Activated CD8-positive, alpha-beta T cell treated with anti-CD3 and anti-CD28 coated beads, Interleukin-2, amount 10 ng/mL, durations not matched to agents 7 days and 5 days (primary cell): ENCODE measurements at regions of chr3 and their contacts with region 1.

Region 1: DNA sequence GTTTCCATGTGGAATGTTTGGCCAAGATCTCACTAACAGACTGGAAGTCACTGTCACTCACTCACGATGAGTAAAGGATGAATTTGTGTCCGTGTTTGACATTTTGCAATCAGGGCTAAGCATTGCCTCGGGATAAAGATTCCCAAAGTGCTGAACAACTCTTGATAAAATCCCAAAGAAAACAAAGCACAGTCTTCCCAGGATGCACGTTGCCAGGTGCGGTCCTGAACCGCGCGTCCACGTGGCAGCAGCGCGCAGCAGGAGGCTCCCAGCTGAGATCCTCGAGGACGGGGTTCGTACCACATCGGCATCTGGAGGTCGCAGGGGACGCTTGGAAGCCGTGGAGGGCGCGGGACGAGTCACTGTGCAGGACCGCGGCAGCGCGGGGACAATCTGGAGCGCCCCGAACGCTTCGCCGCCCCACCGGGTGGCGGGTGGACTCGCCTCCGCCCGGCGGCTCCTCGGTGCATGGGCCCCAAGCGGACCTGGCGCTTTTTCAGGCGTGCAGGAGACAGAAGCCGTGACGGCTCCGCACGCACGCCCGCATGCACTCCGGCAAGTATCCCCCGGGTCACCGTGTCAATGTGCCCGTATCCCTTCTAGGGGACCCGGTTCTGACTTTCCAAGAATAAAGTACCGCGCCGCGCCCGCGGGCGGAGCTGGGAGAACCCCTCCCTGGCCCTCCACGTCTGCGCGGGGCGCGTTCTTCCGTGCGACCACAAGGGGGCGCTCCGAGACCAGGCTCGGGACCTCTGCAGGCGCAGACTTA is 17.7 kb downstream of the CPN2 start:
- DNase-seq: peak; percentile 91
- ATAC-seq: peak; percentile 98
- H3K4me3 Mint-ChIP-seq: peak overlapping the region; percentile 71
- H3K27ac Mint-ChIP-seq: no peak overlapping the region
- H3K4me1 Mint-ChIP-seq: peaks cover 8% of the 10 kb centered on the region
- H3K27me3 Mint-ChIP-seq: peaks cover 18% of the 10 kb centered on the region

Region 2: GRCh38 chr3:194064380-194065332 is 268.7 kb before region 1 on chr3:
- CTCF ChIA-PET with region 1: no interaction called
- POLR2A ChIA-PET with region 1: no interaction called
- DNase-seq: no peak
- ATAC-seq: no peak
- H3K4me3 Mint-ChIP-seq: no peak overlapping the region
- H3K27ac Mint-ChIP-seq: no peak overlapping the region
- H3K4me1 Mint-ChIP-seq: peaks cover under 1% of the 10 kb centered on the region
- H3K27me3 Mint-ChIP-seq: peaks cover 44% of the 10 kb centered on the region

Region 3: DNA sequence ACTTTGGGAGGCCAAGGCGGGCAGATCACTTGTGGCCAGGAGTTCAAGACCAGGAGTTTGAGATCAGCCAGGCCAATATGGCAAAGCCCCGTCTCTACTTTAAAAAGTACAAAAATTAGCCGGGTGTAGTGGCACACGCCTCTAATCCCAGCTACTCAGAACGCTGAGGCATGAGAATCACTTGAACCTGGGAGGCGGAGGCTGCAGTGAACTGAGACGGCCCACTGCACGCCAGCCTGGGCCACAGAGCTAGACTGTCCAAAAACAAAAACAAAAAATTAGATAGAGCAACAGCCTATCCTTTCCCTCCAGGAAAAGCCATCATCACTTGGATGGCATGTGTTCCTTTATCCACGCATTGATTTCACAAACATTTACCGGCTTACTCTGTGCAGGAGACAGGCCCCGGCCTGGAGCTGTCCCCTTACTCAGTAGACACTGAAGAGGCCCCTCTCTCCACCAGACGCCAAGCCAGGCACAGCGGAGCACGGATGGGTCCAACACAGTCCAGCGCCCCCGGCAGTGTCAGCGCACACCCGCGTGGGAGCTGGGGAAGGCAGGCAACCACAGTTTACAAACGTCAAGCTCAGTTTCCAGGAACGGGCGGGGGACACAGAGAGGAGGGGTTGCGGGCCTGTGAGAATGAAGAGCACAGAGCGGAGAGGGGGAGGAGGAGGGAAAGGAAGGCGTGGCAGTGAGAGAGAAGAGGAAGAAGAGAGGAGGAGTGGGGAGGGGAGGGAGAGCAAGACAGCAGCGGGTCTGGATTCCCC is 62.6 kb after region 1 on chr3:
- CTCF ChIA-PET with region 1: interaction called, 10 read pairs
- POLR2A ChIA-PET with region 1: interaction called, 3 read pairs
- DNase-seq: peak; percentile 72
- ATAC-seq: peak; percentile 57
- H3K4me3 Mint-ChIP-seq: peak overlapping the region; percentile 44
- H3K27ac Mint-ChIP-seq: peak overlapping the region; percentile 54
- H3K4me1 Mint-ChIP-seq: peaks cover 50% of the 10 kb centered on the region
- H3K27me3 Mint-ChIP-seq: peaks cover 22% of the 10 kb centered on the region

Region 4: DNA sequence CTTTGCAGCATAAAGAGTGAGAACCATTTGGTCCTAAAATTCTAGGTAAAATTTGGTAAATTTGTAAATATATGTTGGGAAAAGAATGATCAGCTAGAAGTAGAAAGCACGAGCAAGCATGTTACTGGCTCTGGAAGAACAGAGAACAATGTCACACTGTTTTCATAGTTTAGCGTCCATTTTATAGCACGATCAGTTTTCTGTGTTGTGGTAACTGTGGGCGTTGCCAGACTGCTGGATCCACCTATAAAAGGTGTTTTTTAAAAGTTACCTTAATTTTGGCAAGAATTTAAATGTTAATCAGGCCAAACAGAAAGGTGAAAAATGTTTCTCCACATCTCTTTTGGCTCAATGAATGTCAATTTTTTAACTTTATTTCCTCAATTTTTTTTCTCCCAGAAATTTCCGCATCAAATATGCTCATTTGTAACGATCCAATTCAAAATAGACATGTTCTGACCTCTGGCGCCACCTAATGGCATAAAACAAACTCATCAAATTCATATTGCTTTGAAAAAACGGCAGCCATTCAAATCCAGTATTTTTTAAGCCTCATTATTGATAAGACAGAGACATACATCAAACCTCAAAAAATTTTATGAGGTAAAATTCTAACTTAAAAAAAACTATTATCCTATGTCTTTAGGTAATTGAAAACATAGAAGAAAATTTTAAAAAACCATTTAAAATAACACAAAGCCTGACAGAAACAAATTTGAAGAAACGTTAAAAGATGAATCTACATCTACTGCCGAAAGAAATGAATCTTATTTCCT is 71.2 kb after region 1 on chr3:
- CTCF ChIA-PET with region 1: interaction called, 33 read pairs
- POLR2A ChIA-PET with region 1: no interaction called
- DNase-seq: peak; percentile 60
- ATAC-seq: no peak
- H3K4me3 Mint-ChIP-seq: no peak overlapping the region
- H3K27ac Mint-ChIP-seq: no peak overlapping the region
- H3K4me1 Mint-ChIP-seq: peaks cover 7% of the 10 kb centered on the region
- H3K27me3 Mint-ChIP-seq: no peaks in the 10 kb centered on the region